GM12878 (cell line): ENCODE measurements at regions of chr7 and their contacts with region 1.

Region 1: GRCh38 chr7:44999245-45000095 is 531 bp upstream of the CCM2 start:
- DNase-seq: peak; percentile 96
- ATAC-seq: peak; percentile 88
- H3K4me3 ChIP-seq: peak overlapping the region; percentile 95
- H3K27ac ChIP-seq: peak overlapping the region; percentile 79
- H3K4me1 ChIP-seq: peaks cover 43% of the 10 kb centered on the region
- H3K27me3 ChIP-seq: no peaks in the 10 kb centered on the region
- CTCF ChIP-seq: no peak
- EP300 ChIP-seq: no peak
- POLR2A ChIP-seq: no peak; the same call in none of the 2 replicates
- RAD21 ChIP-seq: no peak

Region 2: GRCh38 chr7:44894888-44895580 is 104.4 kb before region 1 on chr7:
- CTCF ChIA-PET with region 1: no interaction called
- POLR2A ChIA-PET with region 1: no interaction called
- RAD21 ChIA-PET with region 1: no interaction called
- SMC1A ChIA-PET with region 1: no interaction called
- in situ Hi-C with region 1: no loop called
- intact Hi-C with region 1: no loop called
- DNase-seq: no peak
- ATAC-seq: no peak
- H3K4me3 ChIP-seq: no peak overlapping the region
- H3K27ac ChIP-seq: no peak overlapping the region
- H3K4me1 ChIP-seq: no peaks in the 10 kb centered on the region
- H3K27me3 ChIP-seq: no peaks in the 10 kb centered on the region
- CTCF ChIP-seq: no peak
- EP300 ChIP-seq: no peak
- POLR2A ChIP-seq: no peak
- RAD21 ChIP-seq: no peak

Region 3: GRCh38 chr7:44973610-44974401 is 25.7 kb before region 1 on chr7:
- CTCF ChIA-PET with region 1: interaction called, 52 read pairs
- POLR2A ChIA-PET with region 1: interaction called, 280 read pairs
- RAD21 ChIA-PET with region 1: interaction called, 303 read pairs
- SMC1A ChIA-PET with region 1: interaction called, 303 read pairs
- in situ Hi-C with region 1: no loop called
- intact Hi-C with region 1: loop called (anchors 2 kb)
- DNase-seq: no peak
- ATAC-seq: peak; percentile 56
- H3K4me3 ChIP-seq: no peak overlapping the region
- H3K27ac ChIP-seq: no peak overlapping the region
- H3K4me1 ChIP-seq: peaks cover 24% of the 10 kb centered on the region
- H3K27me3 ChIP-seq: no peaks in the 10 kb centered on the region
- CTCF ChIP-seq: peak; percentile 56 to 77 (median 62)
- EP300 ChIP-seq: no peak
- POLR2A ChIP-seq: no peak
- RAD21 ChIP-seq: peak; percentile 58

Region 4: GRCh38 chr7:44986218-44987053 is 13.0 kb before region 1 on chr7:
- CTCF ChIA-PET with region 1: interaction called, 13 read pairs
- POLR2A ChIA-PET with region 1: interaction called, 280 read pairs
- RAD21 ChIA-PET with region 1: interaction called, 303 read pairs
- SMC1A ChIA-PET with region 1: interaction called, 303 read pairs
- in situ Hi-C with region 1: no loop called
- intact Hi-C with region 1: loop called (anchors 1 kb)
- DNase-seq: peak; percentile 84
- ATAC-seq: peak; percentile 90
- H3K4me3 ChIP-seq: peak overlapping the region; percentile 93
- H3K27ac ChIP-seq: peak overlapping the region; percentile 86
- H3K4me1 ChIP-seq: peaks cover 22% of the 10 kb centered on the region
- H3K27me3 ChIP-seq: no peaks in the 10 kb centered on the region
- CTCF ChIP-seq: no peak
- EP300 ChIP-seq: peak in 1 of 2 experiments; percentile 47; a peak in 1 of 4 replicates
- POLR2A ChIP-seq: peak; percentile 100
- RAD21 ChIP-seq: no peak

Region 5: GRCh38 chr7:45021604-45022296 is 22.3 kb after region 1 on chr7:
- CTCF ChIA-PET with region 1: interaction called, 19 read pairs
- POLR2A ChIA-PET with region 1: interaction called, 177 read pairs
- RAD21 ChIA-PET with region 1: interaction called, 66 read pairs
- SMC1A ChIA-PET with region 1: interaction called, 76 read pairs
- in situ Hi-C with region 1: no loop called
- intact Hi-C with region 1: loop called (anchors 2 kb)
- DNase-seq: peak; percentile 45
- ATAC-seq: peak; percentile 87
- H3K4me3 ChIP-seq: no peak overlapping the region
- H3K27ac ChIP-seq: peak overlapping the region; percentile 30
- H3K4me1 ChIP-seq: peaks cover 19% of the 10 kb centered on the region
- H3K27me3 ChIP-seq: no peaks in the 10 kb centered on the region
- CTCF ChIP-seq: no peak
- EP300 ChIP-seq: peak; percentile 56 to 68; a peak in 2 of 4 replicates
- POLR2A ChIP-seq: no peak
- RAD21 ChIP-seq: no peak

Region 6: DNA sequence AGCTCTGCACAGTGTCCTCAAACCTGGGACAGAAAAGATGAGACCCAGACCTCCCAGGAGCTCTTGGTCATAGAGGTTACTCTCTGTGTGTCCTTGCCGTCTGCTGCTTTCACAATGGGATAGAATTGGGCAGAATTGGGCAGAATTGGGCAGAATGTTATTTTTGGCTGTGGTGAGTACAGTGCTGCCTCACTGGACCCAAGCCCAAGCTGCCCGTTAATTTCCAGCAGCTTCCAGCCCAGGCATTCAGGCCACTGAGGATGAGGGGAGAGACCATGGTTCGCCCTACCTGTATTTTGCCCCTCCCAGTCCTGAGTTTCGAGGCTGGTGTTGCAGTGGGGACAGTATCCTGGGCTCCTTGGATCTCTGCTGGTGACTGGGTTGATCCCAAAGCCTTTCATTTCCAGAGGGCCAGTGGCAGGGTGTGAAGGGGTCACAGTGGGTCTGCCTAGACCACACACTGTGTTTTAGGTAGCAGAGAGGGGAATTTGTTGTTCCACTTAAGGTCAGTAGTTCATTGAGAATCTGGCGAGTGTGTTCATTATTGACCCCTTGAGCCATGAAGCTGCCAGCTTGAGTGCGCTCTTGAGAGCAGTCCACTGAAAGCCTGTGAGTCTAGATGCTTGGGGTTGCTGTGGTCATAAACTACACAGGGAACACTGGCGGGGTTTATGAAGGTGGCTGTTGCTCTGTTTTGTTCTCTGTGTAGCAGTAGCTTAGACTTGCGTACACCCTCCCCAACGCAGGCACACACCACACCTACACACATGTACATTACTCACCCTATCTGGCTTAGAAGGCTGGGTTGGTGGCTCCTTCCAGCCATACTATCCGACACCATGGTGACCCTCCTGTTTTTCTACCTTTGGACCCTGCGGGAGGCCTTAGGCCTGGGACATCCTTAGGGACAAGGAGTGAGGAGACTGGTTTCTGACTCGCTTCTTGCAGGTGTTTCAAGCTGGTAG is 65.8 kb after region 1 on chr7:
- CTCF ChIA-PET with region 1: no interaction called
- POLR2A ChIA-PET with region 1: interaction called, 3 read pairs
- RAD21 ChIA-PET with region 1: interaction called, 10 read pairs
- SMC1A ChIA-PET with region 1: interaction called, 7 read pairs
- in situ Hi-C with region 1: no loop called
- intact Hi-C with region 1: no loop called
- DNase-seq: no peak
- ATAC-seq: no peak
- H3K4me3 ChIP-seq: no peak overlapping the region
- H3K27ac ChIP-seq: no peak overlapping the region
- H3K4me1 ChIP-seq: 0 out of 2 replicates have a peak, but pooled peaks cover 8% of the 10 kb centered on the region
- H3K27me3 ChIP-seq: no peaks in the 10 kb centered on the region
- CTCF ChIP-seq: no peak
- EP300 ChIP-seq: no peak
- POLR2A ChIP-seq: no peak
- RAD21 ChIP-seq: no peak